Activated B cell treated with CpG ODN at 0.5 μM for 24 hours (primary cell): ENCODE measurements at regions of chr19 and their contacts with region 1.

Region 1: DNA sequence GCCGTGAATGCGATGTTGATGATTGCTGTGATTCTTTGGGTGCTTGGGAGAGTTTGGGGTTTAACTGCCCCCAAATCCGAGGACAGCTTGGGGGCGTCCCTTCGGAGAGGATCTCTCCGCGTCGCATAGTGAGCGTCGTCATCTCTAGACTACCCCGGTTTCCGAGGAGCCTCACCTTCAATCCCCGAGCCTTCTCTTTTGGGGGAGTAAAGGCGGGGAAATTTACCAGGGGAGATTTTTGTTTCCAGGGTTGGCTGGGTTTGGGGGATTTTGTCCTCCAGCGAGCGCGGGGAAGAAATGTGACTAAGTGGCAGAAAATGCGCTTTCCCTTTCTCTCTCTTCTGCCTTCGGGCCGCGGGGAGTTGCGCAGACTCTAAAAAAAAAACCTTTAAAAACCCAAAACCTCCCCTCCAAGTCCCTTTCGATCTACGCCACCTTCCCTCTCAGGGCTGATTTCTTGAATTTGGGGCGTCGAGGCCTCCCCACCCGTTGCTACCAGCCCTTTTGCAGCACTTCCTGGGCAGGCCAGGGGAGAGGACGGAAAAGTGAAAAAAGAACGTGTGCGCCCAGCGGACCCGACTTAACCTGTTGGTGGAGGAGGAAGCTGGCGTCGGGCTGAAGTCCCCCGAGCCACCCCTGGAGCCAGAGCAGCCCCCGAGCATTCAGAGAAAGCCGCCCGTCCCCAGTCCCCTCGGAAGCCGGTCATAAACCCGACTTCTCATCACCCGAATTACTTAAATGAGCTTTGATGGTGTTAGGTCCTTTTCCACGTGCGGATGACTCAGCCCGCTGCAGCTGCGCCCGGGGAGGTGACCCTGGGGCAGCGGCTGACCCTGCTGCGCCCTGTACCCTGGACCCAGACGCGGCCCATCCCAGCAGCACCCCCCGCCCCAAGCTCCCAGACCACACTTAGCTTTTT is 17.7 kb downstream of the NFIX start:
- DNase-seq: no peak
- ATAC-seq: peak; percentile 57
- H3K4me3 Mint-ChIP-seq: peak overlapping the region; percentile 89
- H3K27ac Mint-ChIP-seq: peak overlapping the region; percentile 88
- H3K4me1 Mint-ChIP-seq: peaks cover 41% of the 10 kb centered on the region
- H3K27me3 Mint-ChIP-seq: peaks cover 65% of the 10 kb centered on the region
- CTCF ChIP-seq: no peak

Region 2: GRCh38 chr19:12833738-12834565 is 179.0 kb before region 1 on chr19:
- CTCF ChIA-PET with region 1: no interaction called
- POLR2A ChIA-PET with region 1: no interaction called
- intact Hi-C with region 1: no loop called
- DNase-seq: no peak
- ATAC-seq: peak; percentile 18
- H3K4me3 Mint-ChIP-seq: peak overlapping the region; percentile 51
- H3K27ac Mint-ChIP-seq: no peak overlapping the region
- H3K4me1 Mint-ChIP-seq: peaks cover 28% of the 10 kb centered on the region
- H3K27me3 Mint-ChIP-seq: peaks cover 66% of the 10 kb centered on the region
- CTCF ChIP-seq: no peak

Region 3: DNA sequence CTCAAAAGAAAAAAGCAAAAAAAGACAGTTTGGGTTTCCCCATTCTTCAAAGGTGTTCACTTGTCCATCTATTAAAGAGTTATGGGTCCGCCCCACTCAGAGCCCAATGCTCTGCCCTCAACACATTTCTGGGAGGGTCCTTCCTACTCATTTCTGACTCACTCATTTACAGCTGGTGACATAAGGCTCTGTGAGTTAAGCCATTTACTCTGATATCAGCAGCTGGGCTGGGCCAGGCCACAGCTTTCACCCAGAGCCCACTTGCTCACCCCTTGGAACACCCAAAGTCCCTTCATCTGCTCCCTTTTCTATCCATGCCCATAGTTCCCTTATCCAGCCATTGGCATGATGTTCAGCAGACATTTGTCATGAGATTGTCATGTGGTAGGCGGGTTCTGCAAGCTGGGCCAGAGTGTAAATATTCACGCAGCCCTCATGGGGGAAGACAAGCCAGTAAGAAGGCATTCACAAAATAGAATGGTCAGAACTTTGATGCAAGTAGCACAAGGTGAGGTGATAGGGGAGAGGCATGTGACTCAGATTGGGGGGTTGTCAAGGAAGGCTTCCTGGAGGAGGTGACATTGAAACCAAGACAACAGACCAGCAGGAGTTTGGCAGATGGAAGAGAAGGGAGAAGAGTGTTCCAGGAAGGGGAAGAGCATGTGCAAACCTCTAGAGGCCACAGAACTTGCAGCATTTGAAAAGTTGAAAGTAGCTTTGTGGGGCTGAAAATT is 168.8 kb before region 1 on chr19:
- CTCF ChIA-PET with region 1: no interaction called
- POLR2A ChIA-PET with region 1: no interaction called
- intact Hi-C with region 1: no loop called
- DNase-seq: no peak
- ATAC-seq: no peak
- H3K4me3 Mint-ChIP-seq: no peak overlapping the region
- H3K27ac Mint-ChIP-seq: no peak overlapping the region
- H3K4me1 Mint-ChIP-seq: peaks cover 30% of the 10 kb centered on the region
- H3K27me3 Mint-ChIP-seq: peaks cover 47% of the 10 kb centered on the region
- CTCF ChIP-seq: no peak

Region 4: GRCh38 chr19:12959482-12959881 is 53.5 kb before region 1 on chr19:
- CTCF ChIA-PET with region 1: no interaction called
- POLR2A ChIA-PET with region 1: no interaction called
- intact Hi-C with region 1: no loop called
- DNase-seq: no peak
- ATAC-seq: no peak
- H3K4me3 Mint-ChIP-seq: no peak overlapping the region
- H3K27ac Mint-ChIP-seq: no peak overlapping the region
- H3K4me1 Mint-ChIP-seq: peaks cover 23% of the 10 kb centered on the region
- H3K27me3 Mint-ChIP-seq: no peaks in the 10 kb centered on the region
- CTCF ChIP-seq: no peak

Region 5: DNA sequence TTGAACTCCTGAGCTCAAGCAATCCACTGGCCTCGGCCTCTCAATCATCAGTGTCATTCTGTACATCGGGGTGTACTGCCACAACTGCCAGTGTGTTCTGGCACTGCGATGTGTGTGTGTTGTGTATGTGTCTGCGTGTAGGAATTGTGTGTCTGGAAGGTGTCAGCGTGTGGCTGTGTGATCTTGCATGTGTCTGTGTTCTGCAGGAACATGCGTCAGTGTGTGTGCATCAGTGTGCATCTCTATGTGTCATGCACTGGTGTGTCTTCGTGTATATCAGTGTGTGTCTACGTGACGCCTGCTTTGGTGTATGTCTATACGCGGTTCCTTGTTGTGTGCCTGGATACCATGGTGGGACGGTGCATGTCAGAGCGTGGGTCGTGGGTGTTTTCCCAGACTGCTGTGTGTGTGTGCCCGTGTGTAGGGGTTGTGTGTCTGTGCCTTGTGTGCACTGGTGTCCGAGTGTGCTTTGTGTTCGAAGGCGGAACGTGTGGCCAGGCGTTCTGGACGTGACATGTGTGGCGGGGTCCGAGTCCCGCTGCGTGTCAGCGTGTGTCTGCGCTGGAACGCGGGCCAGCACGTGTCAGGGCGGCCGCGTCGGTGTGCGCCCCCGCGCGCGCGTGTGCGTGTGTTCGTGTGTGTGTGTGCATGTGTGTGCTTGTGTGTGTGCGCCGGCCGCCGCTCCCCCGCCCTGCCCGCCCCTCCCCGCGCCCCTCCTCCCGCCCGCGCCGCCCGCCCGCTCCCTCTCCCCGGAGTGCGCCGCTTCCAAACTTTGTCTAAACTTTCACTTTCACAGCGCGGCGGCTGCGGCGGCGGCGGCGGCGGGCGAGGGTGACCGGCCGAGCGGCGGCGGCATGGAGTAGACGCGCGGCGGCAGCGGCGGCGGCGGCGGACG is 18.0 kb before region 1 on chr19 and contains the start of gene NFIX:
- CTCF ChIA-PET with region 1: no interaction called
- POLR2A ChIA-PET with region 1: no interaction called
- intact Hi-C with region 1: loop called (anchors 1 kb)
- DNase-seq: peak; percentile 53
- ATAC-seq: peak; percentile 61
- H3K4me3 Mint-ChIP-seq: peak within 1 kb of the TSS; percentile 83
- H3K27ac Mint-ChIP-seq: peak within 1 kb of the TSS; percentile 10
- H3K4me1 Mint-ChIP-seq: peaks cover 8% of the 10 kb centered on the region
- H3K27me3 Mint-ChIP-seq: peaks cover 15% of the 10 kb centered on the region
- CTCF ChIP-seq: no peak
- total RNA-seq, gene NFIX: 2.6 and 2.7 TPM in 2 replicates

Region 6: DNA sequence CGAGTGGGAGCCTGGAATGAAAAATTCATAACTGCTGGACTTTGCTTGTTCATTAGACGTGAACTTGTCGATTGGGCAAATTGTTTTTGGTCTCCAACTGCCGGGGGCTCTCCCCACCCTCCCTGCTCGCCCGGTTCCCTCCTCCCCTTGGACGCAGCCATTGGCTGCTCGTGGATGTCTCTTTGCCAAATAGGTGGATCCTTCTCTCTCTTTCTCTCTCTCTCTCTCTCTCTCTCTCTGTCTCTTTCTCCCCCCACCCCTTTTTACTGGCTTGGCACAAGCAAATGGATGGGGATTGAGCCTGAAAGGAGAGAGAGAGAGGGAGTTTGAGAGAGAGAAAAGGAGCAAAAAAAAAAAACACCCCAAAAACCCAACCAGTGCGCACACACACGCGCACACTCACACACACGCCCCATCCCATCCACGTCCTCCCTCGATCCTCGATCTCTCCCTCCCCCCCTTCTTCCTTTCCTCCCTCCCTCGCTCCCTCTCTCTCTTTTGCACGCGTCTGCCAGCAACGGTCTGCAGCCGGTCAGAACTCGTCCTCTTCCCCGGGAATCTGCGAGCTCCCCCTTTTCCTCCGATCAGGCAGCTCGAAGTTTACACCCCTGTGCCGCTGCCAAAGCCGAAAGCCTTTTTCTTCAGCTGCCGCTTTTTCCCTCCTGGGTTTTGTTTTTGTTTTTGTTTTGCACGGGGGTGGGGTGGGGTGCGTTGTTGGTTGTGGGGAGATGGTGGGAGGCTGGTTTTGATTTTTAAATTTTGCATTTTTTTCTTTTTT is 10.1 kb after region 1 on chr19:
- CTCF ChIA-PET with region 1: no interaction called
- POLR2A ChIA-PET with region 1: interaction called, 4 read pairs
- intact Hi-C with region 1: loop called (anchors 1 kb)
- DNase-seq: no peak
- ATAC-seq: peak; percentile 34
- H3K4me3 Mint-ChIP-seq: peak overlapping the region; percentile 80
- H3K27ac Mint-ChIP-seq: no peak overlapping the region
- H3K4me1 Mint-ChIP-seq: peaks cover 30% of the 10 kb centered on the region
- H3K27me3 Mint-ChIP-seq: peaks cover 29% of the 10 kb centered on the region
- CTCF ChIP-seq: no peak

Region 7: DNA sequence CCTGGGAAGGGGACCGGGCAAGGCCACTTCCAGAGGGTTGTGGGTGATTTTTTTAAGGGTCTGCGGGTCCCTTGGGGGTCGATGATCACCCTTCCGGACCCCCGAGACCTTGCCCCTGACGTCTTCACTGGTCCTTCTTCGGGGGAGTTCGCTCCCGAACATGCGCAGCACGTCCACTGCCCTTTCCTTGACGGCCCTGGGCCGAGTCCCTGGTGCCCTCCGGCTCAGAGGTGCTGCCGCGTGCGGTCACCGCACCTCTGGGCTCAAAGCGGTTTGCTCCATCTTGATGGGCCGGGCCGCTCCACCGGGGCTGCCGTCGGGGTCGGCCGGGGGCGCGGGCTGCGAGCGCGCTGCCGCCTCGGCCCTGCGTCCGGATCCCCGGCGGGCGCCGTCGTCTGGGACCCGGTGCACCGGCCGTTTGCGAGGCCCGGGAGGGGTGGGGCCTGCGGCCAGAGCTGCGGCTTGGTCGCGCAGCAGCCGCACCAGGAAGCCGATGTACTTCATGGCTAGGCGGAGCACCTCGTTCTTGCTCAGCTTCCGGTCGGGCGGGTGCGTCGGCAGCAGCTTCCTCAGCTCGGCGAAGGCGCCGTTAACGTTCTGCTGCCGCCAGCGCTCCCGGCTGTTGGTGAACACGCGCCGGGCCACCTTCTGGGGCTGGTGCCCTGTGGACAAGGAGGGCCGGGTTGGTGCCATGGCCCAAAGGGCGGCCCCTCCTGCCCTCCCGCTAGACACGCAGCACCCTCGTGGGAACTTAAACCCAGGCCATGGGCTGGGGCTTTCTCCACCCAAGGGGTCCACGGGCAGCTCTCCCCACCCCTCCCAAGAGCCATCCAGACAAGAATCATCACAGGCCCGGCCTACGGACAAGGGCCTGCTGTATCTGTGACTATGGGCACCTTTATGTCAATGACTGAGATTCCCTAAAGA is 86.4 kb after region 1 on chr19:
- CTCF ChIA-PET with region 1: interaction called, 7 read pairs
- POLR2A ChIA-PET with region 1: interaction called, 8 read pairs
- intact Hi-C with region 1: loop called (anchors 1 kb)
- DNase-seq: peak; percentile 70
- ATAC-seq: peak; percentile 2
- H3K4me3 Mint-ChIP-seq: peak overlapping the region; percentile 88
- H3K27ac Mint-ChIP-seq: peak overlapping the region; percentile 93
- H3K4me1 Mint-ChIP-seq: peaks cover 76% of the 10 kb centered on the region
- H3K27me3 Mint-ChIP-seq: no peaks in the 10 kb centered on the region
- CTCF ChIP-seq: no peak